Testis (tissue), 5 donors: ENCODE measurements at regions of chr5 and their contacts with region 1.

Region 1: DNA sequence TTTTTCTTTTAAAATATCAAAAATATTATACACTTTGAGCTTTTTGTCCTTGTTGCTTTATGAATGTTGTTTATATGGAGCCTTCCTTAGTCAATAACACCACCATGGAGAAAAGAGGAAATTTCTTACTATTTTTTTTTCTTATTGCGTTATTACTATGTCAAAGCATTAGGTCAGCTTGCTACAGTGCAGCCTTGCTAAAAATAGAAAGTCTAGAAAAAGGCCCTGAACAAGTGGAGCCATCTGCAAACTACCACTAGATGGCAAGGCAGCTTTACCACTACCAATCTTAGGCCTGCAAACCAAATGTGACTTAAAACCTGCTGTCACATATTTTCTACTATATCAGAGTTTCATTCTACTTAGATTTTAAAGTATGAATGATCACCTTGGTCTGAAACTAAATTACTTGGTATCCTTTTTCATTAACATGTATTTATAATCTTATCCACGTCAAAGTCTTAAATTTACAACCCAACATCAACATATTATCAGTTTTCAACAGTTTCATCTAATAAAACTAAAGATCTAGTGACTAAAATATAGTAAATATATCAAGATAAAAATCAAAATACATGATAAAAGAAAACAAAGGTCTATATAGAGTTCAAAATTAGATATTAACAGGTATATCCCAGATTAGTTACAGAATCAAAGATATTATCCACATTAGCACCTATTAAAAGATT is 113.1 kb upstream of the ACOT12 start:
- DNase-seq: peak; percentile 76
- H3K4me3 ChIP-seq: no peak overlapping the region
- H3K27ac ChIP-seq: peak overlapping the region in 1 of 2 donors; percentile 62
- H3K4me1 ChIP-seq: peaks cover 7% of the 10 kb centered on the region
- H3K27me3 ChIP-seq: no peaks in the 10 kb centered on the region
- CTCF ChIP-seq: peak; percentile 72 to 90 (median 82)
- POLR2A ChIP-seq: no peak

Region 2: GRCh38 chr5:81428861-81429260 is 78.2 kb before region 1 on chr5:
- intact Hi-C with region 1: no loop called
- DNase-seq: no peak
- H3K4me3 ChIP-seq: no peak overlapping the region
- H3K27ac ChIP-seq: no peak overlapping the region
- H3K4me1 ChIP-seq: peaks cover 3% of the 10 kb centered on the region
- H3K27me3 ChIP-seq: no peaks in the 10 kb centered on the region
- CTCF ChIP-seq: no peak
- POLR2A ChIP-seq: no peak

Region 3: DNA sequence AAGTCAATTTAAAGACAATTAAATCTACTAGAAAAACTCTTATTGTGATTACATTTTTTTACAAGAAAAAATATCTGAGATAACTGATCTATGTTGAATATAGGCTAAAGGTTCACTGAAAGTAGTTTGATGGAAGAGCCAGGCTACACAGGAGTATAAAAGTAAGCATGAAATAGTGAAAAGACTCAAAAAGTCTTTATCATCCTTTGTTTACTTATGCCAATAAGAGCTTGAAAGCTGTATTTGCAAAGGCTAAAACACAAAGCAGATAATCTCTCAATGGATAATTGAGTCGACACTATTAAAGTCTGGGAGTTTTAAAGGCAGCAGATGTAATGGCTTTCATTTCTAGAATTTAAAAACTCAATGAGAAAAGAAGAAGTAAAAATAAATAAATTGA is 201.8 kb after region 1 on chr5:
- intact Hi-C with region 1: no loop called
- DNase-seq: no peak
- H3K4me3 ChIP-seq: no peak overlapping the region
- H3K27ac ChIP-seq: no peak overlapping the region
- H3K4me1 ChIP-seq: no peaks in the 10 kb centered on the region
- H3K27me3 ChIP-seq: no peaks in the 10 kb centered on the region
- CTCF ChIP-seq: no peak
- POLR2A ChIP-seq: no peak

Region 4: GRCh38 chr5:81851481-81852178 is 344.6 kb after region 1 on chr5:
- intact Hi-C with region 1: loop called (anchors 10 kb)
- DNase-seq: peak; percentile 97
- H3K4me3 ChIP-seq: peak overlapping the region; percentile 45 to 60
- H3K27ac ChIP-seq: peak overlapping the region; percentile 49 to 75
- H3K4me1 ChIP-seq: peaks cover 14% of the 10 kb centered on the region
- H3K27me3 ChIP-seq: no peaks in the 10 kb centered on the region
- CTCF ChIP-seq: peak in 1 of 3 experiments; percentile 1
- POLR2A ChIP-seq: no peak